Naive thymus-derived CD4-positive, alpha-beta T cell (primary cell): ENCODE measurements at regions of chr2 and their contacts with region 1.

Region 1: GRCh38 chr2:233711312-233712008 is 1.2 kb upstream of the UGT1A5 start:
- DNase-seq: peak; percentile 16 to 66 (median 48)
- ATAC-seq: peak; percentile 75
- H3K4me3 ChIP-seq: no peak overlapping the region
- H3K4me3 Mint-ChIP-seq: no peak overlapping the region
- H3K27ac ChIP-seq: no peak overlapping the region
- H3K27ac Mint-ChIP-seq: peak overlapping the region in 1 of 9 donors; percentile 17
- H3K4me1 ChIP-seq: no peaks in the 10 kb centered on the region
- H3K4me1 Mint-ChIP-seq: peaks cover 0 to 5% (median 0%) of the 10 kb centered on the region in 7 donors
- H3K27me3 ChIP-seq: peaks cover 0 to 6% of the 10 kb centered on the region in 2 donors
- H3K27me3 Mint-ChIP-seq: peaks cover 21 to 40% (median 23%) of the 10 kb centered on the region in 5 donors

Region 2: GRCh38 chr2:232611551-232612218 is 1099.8 kb before region 1 on chr2:
- CTCF ChIA-PET with region 1: interaction called, 4 read pairs
- POLR2A ChIA-PET with region 1: no interaction called
- intact Hi-C with region 1: loop called in 1 of 2 experiments (anchors 2 kb)
- DNase-seq: peak; percentile 18 to 72 (median 48)
- ATAC-seq: peak; percentile 72
- H3K4me3 ChIP-seq: no peak overlapping the region
- H3K4me3 Mint-ChIP-seq: no peak overlapping the region
- H3K27ac ChIP-seq: no peak overlapping the region
- H3K27ac Mint-ChIP-seq: no peak overlapping the region
- H3K4me1 ChIP-seq: no peaks in the 10 kb centered on the region
- H3K4me1 Mint-ChIP-seq: no peaks in the 10 kb centered on the region
- H3K27me3 ChIP-seq: no peaks in the 10 kb centered on the region
- H3K27me3 Mint-ChIP-seq: no peaks in the 10 kb centered on the region

Region 3: GRCh38 chr2:232854082-232854481 is 857.4 kb before region 1 on chr2:
- CTCF ChIA-PET with region 1: no interaction called
- POLR2A ChIA-PET with region 1: no interaction called
- intact Hi-C with region 1: loop called in 1 of 2 experiments (anchors 5 kb)
- DNase-seq: no peak
- ATAC-seq: no peak
- H3K4me3 ChIP-seq: no peak overlapping the region
- H3K4me3 Mint-ChIP-seq: no peak overlapping the region
- H3K27ac ChIP-seq: no peak overlapping the region
- H3K27ac Mint-ChIP-seq: no peak overlapping the region
- H3K4me1 ChIP-seq: no peaks in the 10 kb centered on the region
- H3K4me1 Mint-ChIP-seq: peaks cover 0 to 5% (median 0%) of the 10 kb centered on the region in 7 donors
- H3K27me3 ChIP-seq: no peaks in the 10 kb centered on the region
- H3K27me3 Mint-ChIP-seq: no peaks in the 10 kb centered on the region

Region 4: GRCh38 chr2:233566141-233566960 is 145.1 kb before region 1 on chr2 and contains the start of gene USP40:
- CTCF ChIA-PET with region 1: no interaction called
- POLR2A ChIA-PET with region 1: no interaction called
- intact Hi-C with region 1: loop called in 1 of 2 experiments (anchors 2 kb)
- DNase-seq: peak; percentile 27 to 60 (median 39)
- ATAC-seq: peak; percentile 86
- H3K4me3 ChIP-seq: peak within 1 kb of the TSS; percentile 75
- H3K4me3 Mint-ChIP-seq: peak within 1 kb of the TSS; percentile 92 to 97 (median 94)
- H3K27ac ChIP-seq: peak within 1 kb of the TSS; percentile 87
- H3K27ac Mint-ChIP-seq: peak within 1 kb of the TSS; percentile 70 to 97 (median 95)
- H3K4me1 ChIP-seq: no peaks in the 10 kb centered on the region
- H3K4me1 Mint-ChIP-seq: peaks cover 7 to 21% (median 14%) of the 10 kb centered on the region in 7 donors
- H3K27me3 ChIP-seq: no peaks in the 10 kb centered on the region
- H3K27me3 Mint-ChIP-seq: peaks cover 0 to 22% (median 0%) of the 10 kb centered on the region in 5 donors
- total RNA-seq, gene USP40: 14.4 to 24.3 (median 20.8) TPM

Region 5: DNA sequence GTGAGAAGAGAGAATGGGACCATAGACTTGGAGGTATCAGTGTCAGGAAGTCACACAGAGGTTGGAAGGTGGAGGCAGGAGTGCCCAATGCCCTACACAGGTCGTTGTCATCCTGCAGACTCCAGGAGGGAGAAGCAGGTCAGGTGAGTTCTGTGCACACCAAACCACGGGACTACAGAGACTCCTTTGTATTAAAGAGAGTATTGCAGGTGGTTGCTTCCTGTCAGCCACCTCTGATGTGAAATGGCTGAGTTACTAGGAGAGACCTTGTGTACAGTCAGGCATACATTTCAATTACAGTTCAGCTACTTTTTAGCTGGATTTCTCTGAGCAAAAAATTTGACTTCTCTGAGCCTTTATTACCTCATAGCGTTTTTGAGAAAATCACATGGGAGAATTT is 390.7 kb after region 1 on chr2:
- CTCF ChIA-PET with region 1: no interaction called
- POLR2A ChIA-PET with region 1: no interaction called
- intact Hi-C with region 1: loop called in 1 of 2 experiments (anchors 5 kb)
- DNase-seq: peak in 7 of 9 donors; percentile 16 to 64 (median 47)
- ATAC-seq: peak; percentile 73
- H3K4me3 ChIP-seq: no peak overlapping the region
- H3K4me3 Mint-ChIP-seq: peak overlapping the region in 8 of 10 donors; percentile 4 to 64 (median 28)
- H3K27ac ChIP-seq: no peak overlapping the region
- H3K27ac Mint-ChIP-seq: peak overlapping the region in 3 of 9 donors; percentile 9 to 64 (median 43)
- H3K4me1 ChIP-seq: peaks cover 36 to 37% of the 10 kb centered on the region in 2 donors
- H3K4me1 Mint-ChIP-seq: peaks cover 25 to 55% (median 43%) of the 10 kb centered on the region in 7 donors
- H3K27me3 ChIP-seq: no peaks in the 10 kb centered on the region
- H3K27me3 Mint-ChIP-seq: peaks cover 0 to 30% (median 0%) of the 10 kb centered on the region in 5 donors